ENCODE measurements at regions of chr11 and their contacts with region 1.

Region 1: DNA sequence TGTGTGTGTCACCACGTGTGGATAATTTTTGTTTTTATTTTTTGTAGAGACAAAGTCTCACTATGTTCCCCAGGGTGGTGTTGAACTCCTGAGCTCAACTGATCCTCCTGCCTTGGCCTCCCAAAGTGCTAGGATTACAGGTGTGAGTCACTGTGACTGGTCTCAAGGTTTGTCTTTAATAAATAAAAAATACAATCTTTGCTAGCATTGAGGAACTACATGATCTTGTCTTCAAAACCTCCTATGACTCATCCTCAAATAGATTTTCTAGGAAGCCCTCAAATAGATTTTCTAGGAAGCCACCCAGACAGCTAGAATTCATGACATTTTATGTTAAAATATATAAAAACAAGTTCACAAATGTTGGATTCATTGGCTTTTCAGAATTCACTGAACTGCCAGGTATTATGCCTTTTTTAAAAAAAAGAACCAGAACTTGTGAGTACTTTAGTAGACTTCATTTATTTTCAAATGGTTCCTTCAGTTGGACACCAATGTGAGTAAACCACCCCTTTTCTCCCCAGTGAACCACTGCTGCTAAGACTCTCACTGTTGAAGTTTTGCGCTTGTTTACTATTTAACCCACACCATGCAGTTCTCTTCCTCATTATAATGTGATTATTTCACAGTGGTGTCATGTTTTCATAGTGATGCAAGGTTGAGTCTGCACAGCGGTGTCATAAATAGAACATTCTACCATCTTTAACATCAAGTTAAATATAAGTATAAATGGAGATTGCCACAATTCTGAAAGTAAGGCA is 303.9 kb downstream of the CASP12 start:
- DNase-seq: peak; percentile 15
- ATAC-seq: peak; percentile 77
- H3K4me3 Mint-ChIP-seq: no peak overlapping the region
- H3K27ac Mint-ChIP-seq: no peak overlapping the region
- H3K4me1 Mint-ChIP-seq: peaks cover 4% of the 10 kb centered on the region
- H3K27me3 Mint-ChIP-seq: peaks cover 5% of the 10 kb centered on the region
- CTCF ChIP-seq: no peak

Region 2: GRCh38 chr11:104476454-104476853 is 117.9 kb before region 1 on chr11:
- CTCF ChIA-PET with region 1: no interaction called
- POLR2A ChIA-PET with region 1: no interaction called
- intact Hi-C with region 1: no loop called
- DNase-seq: no peak
- ATAC-seq: no peak
- H3K4me3 Mint-ChIP-seq: no peak overlapping the region
- H3K27ac Mint-ChIP-seq: no peak overlapping the region
- H3K4me1 Mint-ChIP-seq: no peaks in the 10 kb centered on the region
- H3K27me3 Mint-ChIP-seq: peaks cover 1% of the 10 kb centered on the region
- CTCF ChIP-seq: no peak

Region 3: DNA sequence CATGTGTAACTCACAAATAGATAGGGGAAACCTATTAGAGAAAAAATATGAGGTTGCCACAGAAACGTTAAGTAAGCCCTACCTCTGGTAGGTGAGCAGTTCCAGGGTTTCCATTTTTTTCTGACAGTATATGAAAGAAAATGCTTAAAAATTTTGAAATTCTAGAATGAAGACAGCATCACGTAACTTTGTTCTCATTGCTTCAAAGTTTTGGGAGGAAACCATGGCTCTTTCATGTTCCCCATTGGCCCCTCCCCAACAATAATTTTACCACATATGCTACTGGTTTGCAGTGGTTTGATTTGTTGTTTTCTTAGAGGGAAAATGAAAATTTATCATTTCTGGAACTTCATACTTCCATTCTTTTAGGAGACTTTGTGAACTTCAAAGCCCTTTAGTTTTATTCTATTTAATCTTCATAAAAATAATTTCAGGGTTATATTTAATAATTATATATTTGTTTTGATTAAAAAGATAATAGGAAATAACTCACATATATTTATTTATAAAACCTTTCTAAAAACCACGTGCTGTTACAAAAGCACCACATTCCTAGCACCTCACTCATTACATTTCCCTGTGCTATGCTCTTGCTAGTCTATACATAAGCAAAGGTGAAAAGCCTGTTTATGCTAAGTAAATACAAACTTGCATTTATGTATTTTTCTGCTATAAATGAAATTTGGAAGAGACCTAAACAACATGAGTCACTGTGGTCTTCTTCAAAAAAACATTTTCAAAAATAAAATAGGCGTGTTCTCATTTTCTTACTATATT is 190.5 kb after region 1 on chr11:
- CTCF ChIA-PET with region 1: no interaction called
- POLR2A ChIA-PET with region 1: no interaction called
- intact Hi-C with region 1: no loop called
- DNase-seq: no peak
- ATAC-seq: no peak
- H3K4me3 Mint-ChIP-seq: no peak overlapping the region
- H3K27ac Mint-ChIP-seq: no peak overlapping the region
- H3K4me1 Mint-ChIP-seq: peaks cover 2% of the 10 kb centered on the region
- H3K27me3 Mint-ChIP-seq: no peaks in the 10 kb centered on the region
- CTCF ChIP-seq: no peak

Region 4: GRCh38 chr11:105000797-105001196 is 406.4 kb after region 1 on chr11:
- CTCF ChIA-PET with region 1: no interaction called
- POLR2A ChIA-PET with region 1: no interaction called
- intact Hi-C with region 1: loop called (anchors 10 kb)
- DNase-seq: peak; percentile 60
- ATAC-seq: peak; percentile 90
- H3K4me3 Mint-ChIP-seq: no peak overlapping the region
- H3K27ac Mint-ChIP-seq: no peak overlapping the region
- H3K4me1 Mint-ChIP-seq: peaks cover 7% of the 10 kb centered on the region
- H3K27me3 Mint-ChIP-seq: no peaks in the 10 kb centered on the region
- CTCF ChIP-seq: peak; percentile 84